Activated CD4-positive, alpha-beta T cell treated with anti-CD3 and anti-CD28 coated beads, Interleukin-2, amount 10 ng/mL, durations not matched to agents 24 days and 14 days (primary cell): ENCODE measurements at regions of chr2 and their contacts with region 1.

Region 1: GRCh38 chr2:33372940-33373553 is 103.4 kb upstream of the RASGRP3 start:
- DNase-seq: peak; percentile 79
- H3K4me3 Mint-ChIP-seq: no peak overlapping the region
- H3K27ac Mint-ChIP-seq: no peak overlapping the region
- H3K4me1 Mint-ChIP-seq: no peaks in the 10 kb centered on the region
- H3K27me3 Mint-ChIP-seq: no peaks in the 10 kb centered on the region

Region 2: DNA sequence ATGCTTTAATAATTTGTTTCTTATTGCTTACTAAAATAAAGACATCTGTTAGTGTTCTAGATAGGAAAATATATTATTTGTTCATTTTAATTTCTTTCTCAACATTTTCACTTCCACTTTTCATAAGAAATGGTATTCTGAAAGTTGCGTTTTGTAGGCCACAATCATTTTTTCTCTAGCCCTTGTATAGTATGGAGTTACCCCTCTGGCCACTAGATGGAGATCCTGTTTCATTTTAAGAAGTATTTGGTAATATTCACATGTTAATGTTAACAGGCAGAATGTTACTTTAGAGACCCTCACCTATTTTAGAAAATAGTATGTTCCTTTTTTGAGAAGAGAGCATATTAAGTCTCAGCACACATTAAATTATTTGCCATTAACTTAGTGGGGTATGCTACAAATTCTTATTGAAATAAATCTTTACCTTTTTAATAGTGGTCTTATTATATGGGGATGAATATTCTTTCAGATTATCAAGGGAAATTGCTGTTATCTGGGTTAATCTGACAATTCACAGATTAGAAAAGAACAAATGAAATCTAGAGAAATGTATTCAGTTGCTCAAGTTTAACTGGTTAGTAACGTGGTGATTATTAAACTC is 819.1 kb before region 1 on chr2:
- intact Hi-C with region 1: loop called (anchors 10 kb)
- DNase-seq: peak; percentile 66
- H3K4me3 Mint-ChIP-seq: no peak overlapping the region
- H3K27ac Mint-ChIP-seq: no peak overlapping the region
- H3K4me1 Mint-ChIP-seq: no peaks in the 10 kb centered on the region
- H3K27me3 Mint-ChIP-seq: no peaks in the 10 kb centered on the region

Region 3: DNA sequence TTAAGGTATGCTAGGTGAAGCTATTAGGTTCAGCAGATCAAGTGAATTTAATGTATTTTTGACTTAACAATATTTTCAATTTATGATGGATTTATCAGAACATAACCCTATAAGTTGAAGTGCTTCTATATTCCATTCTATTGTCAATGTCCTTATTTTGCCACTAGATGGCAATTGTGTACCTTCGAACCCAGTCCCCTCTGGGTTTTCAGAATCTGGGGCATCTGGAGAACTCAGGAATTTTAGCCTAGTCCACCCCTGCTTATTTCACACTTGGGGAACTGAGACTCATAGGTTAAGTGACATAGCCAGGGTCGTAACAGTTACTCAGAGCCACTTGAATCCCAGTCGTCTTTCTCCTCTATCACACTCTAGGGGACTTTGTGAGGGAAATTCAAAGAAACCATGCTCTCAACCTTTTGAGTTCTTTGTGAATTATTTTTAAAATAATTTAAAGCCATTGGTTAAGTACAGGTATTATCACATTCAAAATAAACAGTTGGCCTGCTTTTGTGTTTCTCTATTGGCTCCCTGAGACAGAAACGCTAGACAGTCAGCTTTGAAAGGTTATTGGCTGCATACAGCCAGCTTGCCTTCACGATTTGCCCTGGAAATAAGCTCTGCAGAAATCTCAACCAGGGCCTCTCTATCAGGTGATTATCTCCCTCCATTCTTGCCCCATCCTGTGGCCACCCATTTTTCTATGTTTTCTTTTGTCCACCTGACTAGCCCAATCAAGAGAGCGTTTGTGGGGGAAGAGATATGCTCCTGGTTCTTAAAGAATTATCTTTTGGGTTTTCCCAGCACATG is 600.2 kb before region 1 on chr2:
- intact Hi-C with region 1: loop called (anchors 10 kb)
- DNase-seq: no peak
- H3K4me3 Mint-ChIP-seq: no peak overlapping the region
- H3K27ac Mint-ChIP-seq: no peak overlapping the region
- H3K4me1 Mint-ChIP-seq: peaks cover 2% of the 10 kb centered on the region
- H3K27me3 Mint-ChIP-seq: no peaks in the 10 kb centered on the region

Region 4: GRCh38 chr2:33033606-33034081 is 339.4 kb before region 1 on chr2:
- intact Hi-C with region 1: loop called (anchors 2 kb)
- DNase-seq: no peak
- H3K4me3 Mint-ChIP-seq: no peak overlapping the region
- H3K27ac Mint-ChIP-seq: no peak overlapping the region
- H3K4me1 Mint-ChIP-seq: no peaks in the 10 kb centered on the region
- H3K27me3 Mint-ChIP-seq: peaks cover 1% of the 10 kb centered on the region